GM12878 (cell line): ENCODE measurements at regions of chr18 and their contacts with region 1.

Region 1: GRCh38 chr18:58501066-58501896 is 127.6 kb downstream of the ALPK2 start:
- DNase-seq: no peak
- ATAC-seq: peak; percentile 80
- H3K4me3 ChIP-seq: no peak overlapping the region
- H3K27ac ChIP-seq: no peak overlapping the region
- H3K4me1 ChIP-seq: peaks cover 6% of the 10 kb centered on the region
- H3K27me3 ChIP-seq: no peaks in the 10 kb centered on the region
- CTCF ChIP-seq: no peak
- EP300 ChIP-seq: peak; percentile 35 to 68; a peak in 2 of 4 replicates
- POLR2A ChIP-seq: no peak
- RAD21 ChIP-seq: no peak

Region 2: DNA sequence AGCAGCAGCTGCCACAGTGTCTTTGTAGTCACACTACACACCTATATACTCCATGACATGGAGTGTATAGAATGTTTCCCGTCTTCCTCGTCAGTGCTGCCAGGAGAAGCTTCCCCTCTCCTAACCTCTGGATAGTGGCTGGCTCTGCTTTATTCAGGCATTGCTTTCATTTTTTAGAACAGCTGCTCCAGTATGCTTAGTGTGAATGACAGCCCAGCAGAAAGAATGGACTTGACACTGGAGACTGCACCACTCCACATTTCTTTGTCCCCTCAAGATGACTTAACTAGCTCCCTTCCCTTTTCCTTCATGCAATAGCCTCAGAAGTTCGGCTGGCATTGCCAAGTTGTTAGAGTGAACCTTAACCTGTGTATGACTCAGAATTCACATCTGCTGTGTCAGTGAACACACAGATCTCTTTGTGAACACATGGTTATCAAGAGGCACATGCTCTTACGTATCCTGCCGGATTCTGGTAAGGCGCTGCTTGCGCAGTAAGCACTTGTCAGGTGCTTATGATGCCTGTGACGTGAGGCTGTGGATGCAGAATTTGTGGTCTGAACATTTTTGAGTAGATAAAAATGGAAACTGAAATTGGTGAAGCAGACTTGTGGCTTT is 383.4 kb before region 1 on chr18:
- CTCF ChIA-PET with region 1: no interaction called
- POLR2A ChIA-PET with region 1: no interaction called
- RAD21 ChIA-PET with region 1: no interaction called
- SMC1A ChIA-PET with region 1: no interaction called
- in situ Hi-C with region 1: no loop called
- intact Hi-C with region 1: no loop called
- DNase-seq: no peak
- ATAC-seq: no peak
- H3K4me3 ChIP-seq: no peak overlapping the region
- H3K27ac ChIP-seq: no peak overlapping the region
- H3K4me1 ChIP-seq: peaks cover 9% of the 10 kb centered on the region
- H3K27me3 ChIP-seq: no peaks in the 10 kb centered on the region
- CTCF ChIP-seq: no peak
- EP300 ChIP-seq: no peak
- POLR2A ChIP-seq: no peak
- RAD21 ChIP-seq: no peak

Region 3: DNA sequence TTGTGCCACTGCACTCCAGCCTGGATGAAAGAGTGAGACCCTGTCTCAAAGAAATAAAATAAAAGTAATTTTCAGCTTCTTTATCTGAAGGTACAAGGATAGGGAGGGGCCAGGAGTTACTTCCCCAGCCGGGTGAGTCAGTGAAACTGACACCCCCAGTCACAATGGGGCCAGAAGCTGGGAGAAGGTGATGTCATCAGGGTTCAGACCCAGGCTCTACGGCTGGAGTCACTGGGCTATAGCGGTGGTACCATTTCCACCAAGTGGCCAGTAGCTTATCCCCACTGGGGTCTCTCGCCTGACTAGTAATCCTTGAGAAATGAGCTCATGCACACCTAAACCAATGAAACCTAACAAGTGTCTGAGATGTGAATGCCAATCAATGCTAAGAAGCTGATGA is 19.7 kb after region 1 on chr18:
- CTCF ChIA-PET with region 1: interaction called, 13 read pairs
- POLR2A ChIA-PET with region 1: interaction called, 3 read pairs
- RAD21 ChIA-PET with region 1: interaction called, 57 read pairs
- SMC1A ChIA-PET with region 1: interaction called, 66 read pairs
- in situ Hi-C with region 1: no loop called
- intact Hi-C with region 1: no loop called
- DNase-seq: no peak
- ATAC-seq: peak; percentile 73
- H3K4me3 ChIP-seq: no peak overlapping the region
- H3K27ac ChIP-seq: no peak overlapping the region
- H3K4me1 ChIP-seq: peaks cover 16% of the 10 kb centered on the region
- H3K27me3 ChIP-seq: no peaks in the 10 kb centered on the region
- CTCF ChIP-seq: no peak
- EP300 ChIP-seq: no peak
- POLR2A ChIP-seq: no peak
- RAD21 ChIP-seq: no peak